ENCODE measurements at regions of chr3 and their contacts with region 1.

Region 1: DNA sequence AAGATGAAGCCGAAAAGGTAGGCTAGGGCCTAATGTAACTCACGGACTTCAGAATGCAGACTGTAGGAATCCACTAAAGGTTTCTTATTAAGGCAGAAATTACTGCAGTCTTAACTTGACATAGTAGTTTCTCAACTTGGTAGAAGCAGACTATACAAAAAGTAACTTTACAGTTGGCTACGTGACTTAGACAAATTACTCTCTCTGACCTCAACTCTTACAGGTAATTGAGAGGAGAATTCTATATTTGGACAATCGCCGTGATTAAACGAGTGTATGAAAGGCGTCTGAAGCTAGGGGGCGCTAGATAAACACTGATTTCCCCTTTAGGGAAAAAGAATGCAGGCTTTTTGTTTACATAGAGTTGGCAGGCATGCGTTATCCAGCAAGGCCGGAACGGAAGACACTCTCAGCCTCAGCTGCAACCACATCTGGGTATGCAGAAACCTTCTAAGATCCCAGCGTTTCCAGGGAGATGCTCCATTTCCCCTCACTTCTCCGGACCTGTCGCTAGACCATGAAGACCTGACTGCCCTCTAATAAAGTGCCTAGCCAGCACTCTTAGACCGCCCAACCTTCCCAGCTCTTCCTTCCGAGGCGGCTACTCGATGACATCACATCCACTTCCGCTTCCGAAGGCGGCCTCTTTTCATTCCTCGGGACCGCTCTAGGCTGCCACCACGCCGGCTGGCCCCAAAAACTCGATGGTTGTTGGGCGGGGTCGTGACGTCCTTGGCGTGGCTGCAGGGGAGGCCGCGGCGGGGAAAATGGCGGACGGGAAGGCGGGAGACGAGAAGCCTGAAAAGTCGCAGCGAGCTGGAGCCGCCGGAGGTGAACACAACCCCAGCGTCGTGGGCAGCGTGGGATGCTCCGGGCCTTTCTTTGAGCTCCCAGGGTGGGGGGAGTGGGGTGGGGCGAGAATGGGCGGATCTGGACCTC is at the start of gene PCNP:
- DNase-seq: peak; percentile 100
- H3K4me3 Mint-ChIP-seq: peak within 1 kb of the TSS; percentile 95
- H3K27ac Mint-ChIP-seq: peak within 1 kb of the TSS; percentile 96
- H3K4me1 Mint-ChIP-seq: peaks cover 67% of the 10 kb centered on the region
- H3K27me3 Mint-ChIP-seq: no peaks in the 10 kb centered on the region
- total RNA-seq, gene PCNP: 261 to 267 TPM

Region 2: DNA sequence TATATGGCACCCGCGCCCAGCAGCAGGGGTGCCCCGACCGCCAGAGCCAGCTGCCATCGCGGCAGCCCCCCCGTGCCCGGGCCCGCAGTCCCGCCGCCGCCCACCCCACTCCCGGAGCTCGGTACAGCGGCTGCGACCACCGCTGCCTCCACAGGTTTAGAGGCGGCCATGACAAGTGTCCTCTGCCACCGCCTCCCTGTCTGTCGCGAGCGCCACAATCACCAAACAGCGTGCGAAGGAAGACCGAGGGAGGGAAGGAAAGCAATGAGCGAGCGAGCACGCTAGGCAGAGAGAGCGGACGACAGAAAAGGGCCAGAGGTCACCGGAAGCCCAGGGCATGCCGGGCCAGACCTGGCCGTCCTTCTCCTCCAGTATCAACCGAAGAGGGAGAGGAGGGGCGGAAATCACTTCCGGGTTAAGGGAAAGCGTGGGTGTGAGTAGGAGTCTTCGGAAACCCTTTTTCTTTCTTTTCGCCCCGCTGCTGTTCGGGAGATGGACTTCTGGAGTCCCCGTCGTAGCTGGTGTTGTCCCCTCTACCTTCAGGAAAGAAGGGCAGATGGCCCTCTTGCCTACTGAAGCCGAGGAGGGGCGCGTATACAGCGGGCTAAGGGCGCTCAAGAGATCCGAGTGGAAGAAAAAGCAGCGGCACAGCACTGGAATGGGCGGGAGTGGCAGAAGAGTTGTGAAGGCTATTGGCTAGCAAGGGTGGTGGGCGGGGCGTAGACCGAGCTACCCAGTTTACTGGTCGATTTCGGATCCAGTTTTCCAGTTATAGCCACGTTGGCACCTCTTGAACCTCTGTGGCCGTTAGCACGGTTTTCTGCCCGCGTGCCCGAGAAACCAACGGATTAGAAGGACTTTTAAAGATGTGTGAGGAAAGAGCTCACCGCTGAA is 1172.7 kb before region 1 on chr3 and contains the starts of genes LNP1 and TOMM70:
- CTCF ChIA-PET with region 1: no interaction called
- intact Hi-C with region 1: loop called (anchors 1 kb)
- DNase-seq: peak; percentile 98
- H3K4me3 Mint-ChIP-seq: peak within 1 kb of the TSS; percentile 95
- H3K27ac Mint-ChIP-seq: peak within 1 kb of the TSS; percentile 98
- H3K4me1 Mint-ChIP-seq: peaks cover 59% of the 10 kb centered on the region
- H3K27me3 Mint-ChIP-seq: no peaks in the 10 kb centered on the region
- total RNA-seq, gene LNP1: 2.2 to 2.4 TPM
- total RNA-seq, gene TOMM70: 48.5 to 48.6 TPM

Region 3: DNA sequence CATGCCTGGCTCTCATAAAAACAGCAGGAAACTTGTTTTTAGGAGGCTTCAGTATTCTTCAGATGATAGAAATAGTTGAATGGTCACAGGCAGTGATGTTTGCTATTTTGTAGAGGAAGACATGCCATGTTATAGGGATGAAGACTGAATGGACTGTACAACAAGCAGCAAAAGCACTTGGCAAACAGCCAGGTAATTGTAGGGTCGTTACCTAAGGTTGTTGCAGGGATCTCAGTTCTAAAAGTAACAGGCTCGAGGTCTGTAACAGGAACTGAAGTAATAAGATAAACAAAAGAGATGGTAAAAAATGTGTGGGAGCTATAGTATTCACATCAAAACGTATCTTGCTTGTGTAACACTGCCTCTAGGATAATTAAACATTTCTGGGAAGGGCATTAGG is 748.1 kb before region 1 on chr3:
- CTCF ChIA-PET with region 1: no interaction called
- intact Hi-C with region 1: no loop called
- DNase-seq: no peak
- H3K4me3 Mint-ChIP-seq: no peak overlapping the region
- H3K27ac Mint-ChIP-seq: no peak overlapping the region
- H3K4me1 Mint-ChIP-seq: no peaks in the 10 kb centered on the region
- H3K27me3 Mint-ChIP-seq: peaks cover 9% of the 10 kb centered on the region

Region 4: DNA sequence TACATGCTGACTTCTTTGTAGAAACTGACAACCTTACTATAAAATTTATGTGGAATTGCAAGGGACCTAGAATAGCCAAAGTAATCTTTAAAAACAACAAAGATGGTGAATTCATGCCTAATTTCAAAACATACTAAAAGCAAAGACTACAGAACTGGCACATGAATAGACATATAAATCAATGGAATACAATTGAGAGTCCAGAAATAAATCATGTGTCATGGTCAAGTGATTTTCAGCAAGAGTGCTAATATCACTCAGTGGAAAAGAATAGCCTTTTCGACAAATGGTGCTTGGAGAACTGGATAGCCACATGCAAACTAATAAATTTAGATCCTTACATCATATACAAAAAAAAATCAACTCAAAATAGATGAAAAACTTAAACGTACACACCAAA is 262.0 kb before region 1 on chr3:
- CTCF ChIA-PET with region 1: no interaction called
- intact Hi-C with region 1: no loop called
- DNase-seq: no peak
- H3K4me3 Mint-ChIP-seq: no peak overlapping the region
- H3K27ac Mint-ChIP-seq: no peak overlapping the region
- H3K4me1 Mint-ChIP-seq: no peaks in the 10 kb centered on the region
- H3K27me3 Mint-ChIP-seq: no peaks in the 10 kb centered on the region

Region 5: GRCh38 chr3:101381809-101382208 is 191.9 kb before region 1 on chr3:
- CTCF ChIA-PET with region 1: interaction called, 3 read pairs
- intact Hi-C with region 1: loop called (anchors 1 kb)
- DNase-seq: no peak
- H3K4me3 Mint-ChIP-seq: no peak overlapping the region
- H3K27ac Mint-ChIP-seq: no peak overlapping the region
- H3K4me1 Mint-ChIP-seq: peaks cover 59% of the 10 kb centered on the region
- H3K27me3 Mint-ChIP-seq: no peaks in the 10 kb centered on the region

Region 6: GRCh38 chr3:101518421-101518871 is 55.3 kb before region 1 on chr3:
- CTCF ChIA-PET with region 1: interaction called, 9 read pairs
- intact Hi-C with region 1: loop called (anchors 1 kb)
- DNase-seq: peak; percentile 71
- H3K4me3 Mint-ChIP-seq: peak overlapping the region; percentile 73
- H3K27ac Mint-ChIP-seq: peak overlapping the region; percentile 97
- H3K4me1 Mint-ChIP-seq: peaks cover 61% of the 10 kb centered on the region
- H3K27me3 Mint-ChIP-seq: no peaks in the 10 kb centered on the region

Region 7: GRCh38 chr3:101635954-101636798 is 62.5 kb after region 1 on chr3:
- CTCF ChIA-PET with region 1: interaction called, 12 read pairs
- intact Hi-C with region 1: loop called (anchors 1 kb)
- DNase-seq: peak; percentile 92
- H3K4me3 Mint-ChIP-seq: no peak overlapping the region
- H3K27ac Mint-ChIP-seq: no peak overlapping the region
- H3K4me1 Mint-ChIP-seq: no peaks in the 10 kb centered on the region
- H3K27me3 Mint-ChIP-seq: no peaks in the 10 kb centered on the region

Region 8: GRCh38 chr3:101724329-101725193 is 150.8 kb after region 1 on chr3 and contains the start of gene CEP97:
- CTCF ChIA-PET with region 1: no interaction called
- intact Hi-C with region 1: loop called (anchors 1 kb)
- DNase-seq: peak; percentile 94
- H3K4me3 Mint-ChIP-seq: peak within 1 kb of the TSS; percentile 97
- H3K27ac Mint-ChIP-seq: peak within 1 kb of the TSS; percentile 97
- H3K4me1 Mint-ChIP-seq: peaks cover 33% of the 10 kb centered on the region
- H3K27me3 Mint-ChIP-seq: no peaks in the 10 kb centered on the region
- total RNA-seq, gene CEP97: 17.0 to 20.3 TPM